ENCODE measurements at regions of chr1 and their contacts with region 1.

Region 1: GRCh38 chr1:201488817-201489589 is 17.9 kb downstream of the CSRP1 start:
- DNase-seq: peak; percentile 94
- ATAC-seq: peak; percentile 95
- H3K4me3 ChIP-seq: no peak overlapping the region
- H3K27ac ChIP-seq: peak overlapping the region; percentile 79
- H3K4me1 ChIP-seq: peaks cover 27% of the 10 kb centered on the region
- H3K27me3 ChIP-seq: no peaks in the 10 kb centered on the region
- CTCF ChIP-seq: no peak

Region 2: GRCh38 chr1:201408176-201408833 is 80.7 kb before region 1 on chr1:
- CTCF ChIA-PET with region 1: no interaction called
- POLR2A ChIA-PET with region 1: no interaction called
- intact Hi-C with region 1: no loop called
- DNase-seq: peak; percentile 99
- ATAC-seq: peak; percentile 89
- H3K4me3 ChIP-seq: no peak overlapping the region
- H3K27ac ChIP-seq: no peak overlapping the region
- H3K4me1 ChIP-seq: peaks cover 10% of the 10 kb centered on the region; the same call in 1 of the 2 replicates
- H3K27me3 ChIP-seq: no peaks in the 10 kb centered on the region
- CTCF ChIP-seq: peak; percentile 100

Region 3: GRCh38 chr1:201506556-201507359 is 17.8 kb after region 1 on chr1 and contains the start of gene CSRP1:
- CTCF ChIA-PET with region 1: interaction called, 4 read pairs
- POLR2A ChIA-PET with region 1: no interaction called
- intact Hi-C with region 1: loop called (anchors 2 kb)
- DNase-seq: peak; percentile 74
- ATAC-seq: peak; percentile 48
- H3K4me3 ChIP-seq: peak within 1 kb of the TSS; percentile 76
- H3K27ac ChIP-seq: peak within 1 kb of the TSS; percentile 89
- H3K4me1 ChIP-seq: peaks cover 80% of the 10 kb centered on the region
- H3K27me3 ChIP-seq: no peaks in the 10 kb centered on the region
- CTCF ChIP-seq: no peak
- total RNA-seq, gene CSRP1: 147 and 189 TPM in 2 replicates

Region 4: GRCh38 chr1:201614262-201615015 is 125.4 kb after region 1 on chr1:
- CTCF ChIA-PET with region 1: no interaction called
- POLR2A ChIA-PET with region 1: no interaction called
- intact Hi-C with region 1: no loop called
- DNase-seq: no peak
- ATAC-seq: no peak
- H3K4me3 ChIP-seq: no peak overlapping the region
- H3K27ac ChIP-seq: no peak overlapping the region
- H3K4me1 ChIP-seq: no peaks in the 10 kb centered on the region
- H3K27me3 ChIP-seq: no peaks in the 10 kb centered on the region
- CTCF ChIP-seq: no peak